ENCODE measurements at regions of chr1 and their contacts with region 1.

Region 1: GRCh38 chr1:219416594-219417238 is 196.2 kb downstream of the ZC3H11B start:
- DNase-seq: peak in 5 of 10 donors; percentile 3 to 64 (median 50)
- H3K4me3 ChIP-seq: no peak overlapping the region
- H3K27ac ChIP-seq: no peak overlapping the region
- H3K27me3 ChIP-seq: no peaks in the 10 kb centered on the region
- CTCF ChIP-seq: peak; percentile 37 to 75 (median 64)

Region 2: GRCh38 chr1:219020386-219020785 is 396.3 kb before region 1 on chr1:
- intact Hi-C with region 1: no loop called
- DNase-seq: no peak
- H3K4me3 ChIP-seq: no peak overlapping the region
- H3K27ac ChIP-seq: no peak overlapping the region
- H3K27me3 ChIP-seq: no peaks in the 10 kb centered on the region
- CTCF ChIP-seq: no peak

Region 3: GRCh38 chr1:219201656-219202055 is 215.1 kb before region 1 on chr1:
- intact Hi-C with region 1: loop called in 1 of 2 experiments (anchors 5 kb)
- DNase-seq: no peak
- H3K4me3 ChIP-seq: no peak overlapping the region
- H3K27ac ChIP-seq: no peak overlapping the region
- H3K27me3 ChIP-seq: no peaks in the 10 kb centered on the region
- CTCF ChIP-seq: no peak